Colonic mucosa (tissue), 4 donors: ENCODE measurements at regions of chr19 and their contacts with region 1.

Region 1: DNA sequence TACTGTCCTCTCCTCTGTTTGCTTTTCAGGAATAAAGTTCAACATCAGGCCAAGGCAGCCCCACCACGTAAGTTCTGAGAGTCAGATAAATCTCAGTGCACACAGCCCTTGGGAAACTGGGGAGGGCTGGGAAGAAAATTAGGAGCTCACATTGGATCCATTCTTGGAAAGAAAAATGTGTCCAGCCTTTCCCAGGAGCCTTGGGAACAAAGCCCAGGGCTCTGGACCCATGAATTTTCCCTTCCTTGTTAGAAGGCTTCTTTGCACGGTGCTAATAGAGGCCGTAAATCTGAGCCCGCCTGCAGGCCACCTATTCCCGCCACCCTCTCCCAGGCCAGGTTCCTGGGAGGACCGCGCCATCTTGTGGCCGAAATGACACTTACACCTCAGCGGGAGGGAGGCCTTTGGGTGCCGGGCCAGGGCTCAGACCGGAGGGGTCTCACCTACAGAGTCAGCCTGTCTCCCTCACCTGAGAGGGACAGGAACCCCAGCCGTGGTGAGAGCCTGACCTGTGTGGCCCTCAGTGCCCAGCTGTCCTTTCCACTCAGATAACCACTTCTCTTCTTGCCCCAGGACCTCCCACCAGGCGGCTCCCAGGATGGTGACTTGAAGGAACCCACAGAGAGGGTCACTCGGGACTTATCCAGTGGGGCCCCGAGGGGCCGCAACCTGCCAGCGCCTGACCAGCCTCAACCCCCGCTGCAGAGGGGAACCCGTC is 25.1 kb upstream of the KCTD15 start:
- DNase-seq: peak; percentile 75
- H3K4me3 ChIP-seq: no peak overlapping the region
- H3K27ac ChIP-seq: no peak overlapping the region
- H3K4me1 ChIP-seq: no peaks in the 10 kb centered on the region
- H3K27me3 ChIP-seq: no peaks in the 10 kb centered on the region
- CTCF ChIP-seq: peak; percentile 72

Region 2: DNA sequence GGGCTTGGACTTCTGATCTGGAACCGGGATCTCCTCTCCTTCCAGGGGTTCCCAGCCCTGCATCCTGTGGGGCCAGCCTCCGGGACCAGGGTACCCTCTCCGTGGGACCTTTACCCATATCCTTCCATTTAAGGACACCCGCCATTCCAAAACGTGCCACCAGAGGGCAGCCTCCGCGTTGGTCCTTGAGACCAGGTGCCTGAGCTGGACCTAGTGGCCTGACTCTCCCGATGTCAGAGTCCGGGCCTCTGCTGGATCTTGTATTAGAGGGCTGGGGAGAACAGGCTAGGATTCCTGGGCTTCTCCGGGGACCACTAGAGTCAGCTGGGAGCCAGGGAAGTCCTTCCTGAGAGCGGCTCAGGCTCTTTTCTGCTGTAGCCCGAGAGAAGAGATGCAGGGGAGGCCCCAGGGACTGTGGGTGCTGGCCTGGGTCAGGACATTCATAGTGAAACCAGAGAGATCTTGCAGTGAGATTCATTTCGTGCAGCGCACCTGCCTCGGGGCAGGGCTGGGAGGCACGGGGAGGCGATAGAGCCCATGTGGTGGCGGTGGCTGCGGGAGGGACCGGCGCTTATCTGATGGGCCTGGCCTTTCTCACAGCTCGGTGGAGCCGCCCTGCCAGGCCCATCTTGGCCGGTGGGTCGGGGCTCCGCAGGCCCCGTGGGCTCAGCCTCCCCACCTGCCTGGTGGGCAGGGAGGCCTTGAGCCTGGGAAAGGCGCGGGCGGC is 536.1 kb before region 1 on chr19:
- intact Hi-C with region 1: loop called (anchors 5 kb)
- DNase-seq: peak; percentile 93
- H3K4me3 ChIP-seq: no peak overlapping the region
- H3K27ac ChIP-seq: no peak overlapping the region
- H3K4me1 ChIP-seq: no peaks in the 10 kb centered on the region
- H3K27me3 ChIP-seq: no peaks in the 10 kb centered on the region
- CTCF ChIP-seq: peak; percentile 91

Region 3: GRCh38 chr19:33430674-33431277 is 340.8 kb before region 1 on chr19:
- intact Hi-C with region 1: loop called (anchors 2 kb)
- DNase-seq: peak; percentile 68
- H3K4me3 ChIP-seq: no peak overlapping the region
- H3K27ac ChIP-seq: no peak overlapping the region
- H3K4me1 ChIP-seq: no peaks in the 10 kb centered on the region
- H3K27me3 ChIP-seq: no peaks in the 10 kb centered on the region
- CTCF ChIP-seq: peak; percentile 65